ENCODE measurements at regions of chr15 and their contacts with region 1.

Region 1: DNA sequence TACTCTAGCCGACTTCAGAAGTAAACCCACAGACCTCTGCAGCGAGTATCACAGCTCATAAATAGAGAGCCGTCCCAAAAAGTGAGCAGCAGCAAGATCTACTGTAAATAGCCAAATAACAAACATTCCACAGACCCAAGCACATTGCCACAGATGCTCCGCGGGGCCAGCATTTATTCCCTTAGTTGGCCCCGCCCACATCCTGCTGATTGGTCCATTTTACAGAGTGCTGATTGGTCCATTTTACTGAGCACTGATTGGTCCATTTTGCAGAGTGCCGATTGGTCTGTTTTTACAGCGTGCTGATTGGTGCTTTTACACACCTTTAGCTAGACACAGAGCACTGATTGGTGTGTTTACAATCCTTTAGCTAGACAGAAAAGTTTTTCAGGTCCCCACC is 17.3 kb upstream of the GABRB3 start:
- DNase-seq: no peak
- ATAC-seq: no peak
- H3K4me3 ChIP-seq: no peak overlapping the region
- H3K27ac ChIP-seq: no peak overlapping the region
- H3K4me1 ChIP-seq: no peaks in the 10 kb centered on the region
- H3K27me3 ChIP-seq: peaks cover 0 to 6% (median 0%) of the 10 kb centered on the region in 9 donors
- CTCF ChIP-seq: no peak
- POLR2A ChIP-seq: no peak

Region 2: DNA sequence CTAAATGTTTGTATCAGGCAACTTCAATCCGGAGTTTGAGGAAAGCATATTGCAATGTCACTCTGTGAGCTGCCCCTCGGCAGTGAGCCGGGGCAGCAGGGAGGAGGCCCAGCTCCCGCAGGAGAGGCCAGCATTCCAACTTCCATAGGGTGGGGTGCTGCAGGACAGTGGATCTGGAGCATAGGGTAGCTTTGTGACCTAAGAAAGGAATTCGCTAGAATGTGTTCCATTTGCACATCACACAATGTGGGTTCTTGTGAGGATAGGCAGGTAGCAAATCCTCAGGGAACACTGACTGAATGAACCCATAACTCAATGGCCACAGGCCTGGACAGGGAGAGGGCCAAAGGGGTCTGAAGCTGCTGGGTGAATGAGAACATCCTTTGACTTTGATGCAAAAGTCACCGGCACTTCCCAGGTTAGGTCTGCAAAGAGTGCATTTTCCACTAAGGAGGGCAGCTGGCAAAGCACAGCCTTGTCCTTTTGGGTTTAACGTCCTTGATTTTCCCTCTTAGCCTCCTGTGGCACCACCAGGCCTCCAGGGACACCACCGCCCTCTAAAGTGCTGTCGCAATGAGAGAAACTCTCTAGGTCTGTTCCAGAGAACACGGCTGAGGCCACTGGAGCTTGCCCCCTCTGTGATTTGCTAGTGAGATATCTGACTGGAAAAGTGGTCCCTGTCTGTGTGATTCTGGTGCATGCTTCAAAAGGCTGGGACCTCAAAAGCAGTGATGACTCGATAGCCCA is 53.4 kb before region 1 on chr15:
- intact Hi-C with region 1: loop called in 1 of 10 experiments (anchors 10 kb)
- DNase-seq: no peak
- ATAC-seq: no peak
- H3K4me3 ChIP-seq: no peak overlapping the region
- H3K27ac ChIP-seq: no peak overlapping the region
- H3K4me1 ChIP-seq: no peaks in the 10 kb centered on the region
- H3K27me3 ChIP-seq: peaks cover 0 to 4% (median 0%) of the 10 kb centered on the region in 9 donors
- CTCF ChIP-seq: no peak
- POLR2A ChIP-seq: no peak

Region 3: GRCh38 chr15:26773069-26773877 is 16.8 kb before region 1 on chr15:
- intact Hi-C with region 1: no loop called
- DNase-seq: peak; percentile 51 to 76 (median 60)
- ATAC-seq: peak in 3 of 4 donors; percentile 67 to 90 (median 86)
- H3K4me3 ChIP-seq: peak overlapping the region in 11 of 12 donors; percentile 14 to 56 (median 44)
- H3K27ac ChIP-seq: no peak overlapping the region
- H3K4me1 ChIP-seq: peaks cover 0 to 27% (median 2%) of the 10 kb centered on the region in 12 donors
- H3K27me3 ChIP-seq: peaks cover 0 to 49% (median 18%) of the 10 kb centered on the region in 9 donors
- CTCF ChIP-seq: no peak
- POLR2A ChIP-seq: no peak